Dorsolateral prefrontal cortex (tissue), 120 donors: ENCODE measurements at regions of chr4 and their contacts with region 1.

Region 1: GRCh38 chr4:70901984-70902576 is at the start of gene MOB1B:
- DNase-seq: peak; percentile 62 to 91 (median 86)
- H3K4me3 ChIP-seq: peak within 1 kb of the TSS; percentile 54 to 96 (median 82)
- H3K27ac ChIP-seq: peak within 1 kb of the TSS in 58 of 59 donors; percentile 17 to 95 (median 85)
- H3K27me3 ChIP-seq: no peaks in the 10 kb centered on the region
- CTCF ChIP-seq: peak in 37 of 56 donors; percentile 6 to 51 (median 24)
- total RNA-seq, gene MOB1B: 19.6 to 55.0 (median 32.2) TPM

Region 2: DNA sequence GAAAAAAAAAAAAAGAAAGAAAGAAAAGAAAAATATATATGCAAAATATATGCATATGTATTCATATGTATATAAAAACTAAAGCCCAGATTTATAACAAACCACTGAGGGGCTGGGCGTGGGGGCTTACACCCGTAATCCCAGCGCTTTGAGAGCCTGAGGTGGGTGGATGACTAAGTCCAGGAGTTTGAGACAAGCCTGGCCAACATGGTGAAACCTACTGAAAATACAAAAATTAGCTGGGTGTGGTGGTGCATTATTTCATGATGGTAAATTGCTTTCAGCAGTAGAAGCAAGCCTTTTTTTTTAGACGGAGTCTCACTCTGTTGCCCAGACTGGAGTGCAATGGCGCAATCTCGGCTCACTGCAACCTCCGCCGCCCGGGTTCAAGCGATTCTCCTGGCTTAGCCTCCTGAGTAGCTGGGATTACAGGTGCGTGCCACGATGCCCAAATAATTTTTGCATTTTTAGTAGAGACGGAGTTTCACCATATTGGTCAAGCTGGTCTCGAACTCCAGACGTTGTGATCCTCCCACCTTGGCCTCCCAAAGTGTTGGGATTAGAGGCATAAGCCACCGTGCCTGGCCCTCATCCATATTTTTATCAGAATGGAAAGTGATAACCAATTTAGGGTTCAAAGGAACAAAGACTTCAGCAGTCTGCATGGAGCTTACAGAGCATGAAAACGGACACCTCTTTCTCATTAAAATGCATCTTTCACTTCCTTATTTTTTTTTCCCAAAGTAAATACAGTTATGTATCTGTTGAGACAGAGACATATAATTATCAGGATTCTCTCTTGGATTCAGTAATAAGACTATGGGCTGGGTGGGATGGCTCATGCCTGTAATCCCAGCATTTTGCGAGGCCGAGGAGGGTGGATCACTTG is 27.6 kb before region 1 on chr4:
- intact Hi-C with region 1: no loop called
- DNase-seq: no peak
- H3K4me3 ChIP-seq: no peak overlapping the region
- H3K27ac ChIP-seq: no peak overlapping the region
- H3K27me3 ChIP-seq: no peaks in the 10 kb centered on the region
- CTCF ChIP-seq: no peak

Region 3: GRCh38 chr4:70943114-70943513 is 41.0 kb after region 1 on chr4:
- intact Hi-C with region 1: no loop called
- DNase-seq: no peak
- H3K4me3 ChIP-seq: no peak overlapping the region
- H3K27ac ChIP-seq: no peak overlapping the region
- H3K27me3 ChIP-seq: no peaks in the 10 kb centered on the region
- CTCF ChIP-seq: no peak

Region 4: DNA sequence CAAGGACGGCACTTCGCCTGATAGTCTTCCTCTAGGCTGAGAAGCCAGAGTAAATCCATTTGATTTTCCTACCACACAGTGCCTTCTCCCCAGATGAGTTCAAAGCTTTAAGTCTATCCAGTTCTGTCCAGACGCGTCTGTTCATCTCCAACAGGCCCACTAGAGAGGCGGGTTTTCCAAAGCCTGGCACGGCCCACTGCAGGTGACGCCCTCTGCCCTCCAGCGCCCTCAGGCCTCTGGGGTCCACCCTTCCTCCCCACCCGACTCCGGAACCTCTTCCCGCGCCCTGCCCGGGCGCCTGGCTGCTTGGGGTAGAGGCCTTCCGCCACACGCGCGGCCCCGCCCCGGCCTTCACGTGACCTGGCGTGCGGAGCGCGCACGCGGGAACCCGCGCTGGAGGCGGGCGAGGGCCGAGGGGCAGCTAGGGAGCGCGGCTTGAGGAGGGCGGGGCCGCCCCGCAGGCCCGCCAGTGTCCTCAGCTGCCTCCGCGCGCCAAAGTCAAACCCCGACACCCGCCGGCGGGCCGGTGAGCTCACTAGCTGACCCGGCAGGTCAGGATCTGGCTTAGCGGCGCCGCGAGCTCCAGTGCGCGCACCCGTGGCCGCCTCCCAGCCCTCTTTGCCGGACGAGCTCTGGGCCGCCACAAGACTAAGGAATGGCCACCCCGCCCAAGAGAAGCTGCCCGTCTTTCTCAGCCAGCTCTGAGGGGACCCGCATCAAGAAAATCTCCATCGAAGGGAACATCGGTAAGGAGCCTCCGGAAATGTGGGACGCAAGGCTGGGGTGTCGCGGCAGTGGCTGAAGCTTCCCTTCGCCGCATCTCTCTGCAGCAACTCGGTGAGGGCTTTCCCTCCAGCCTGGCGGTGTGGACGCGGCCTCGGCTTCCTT is 91.3 kb after region 1 on chr4 and contains the start of gene DCK:
- intact Hi-C with region 1: loop called in 1 of 2 experiments (anchors 5 kb)
- DNase-seq: peak; percentile 71 to 95 (median 86)
- H3K4me3 ChIP-seq: peak within 1 kb of the TSS; percentile 64 to 95 (median 88)
- H3K27ac ChIP-seq: peak within 1 kb of the TSS; percentile 52 to 97 (median 88)
- H3K27me3 ChIP-seq: no peaks in the 10 kb centered on the region
- CTCF ChIP-seq: peak in 34 of 56 donors; percentile 4 to 61 (median 26)
- total RNA-seq, gene DCK: 12.5 to 37.5 (median 22.1) TPM

Region 5: DNA sequence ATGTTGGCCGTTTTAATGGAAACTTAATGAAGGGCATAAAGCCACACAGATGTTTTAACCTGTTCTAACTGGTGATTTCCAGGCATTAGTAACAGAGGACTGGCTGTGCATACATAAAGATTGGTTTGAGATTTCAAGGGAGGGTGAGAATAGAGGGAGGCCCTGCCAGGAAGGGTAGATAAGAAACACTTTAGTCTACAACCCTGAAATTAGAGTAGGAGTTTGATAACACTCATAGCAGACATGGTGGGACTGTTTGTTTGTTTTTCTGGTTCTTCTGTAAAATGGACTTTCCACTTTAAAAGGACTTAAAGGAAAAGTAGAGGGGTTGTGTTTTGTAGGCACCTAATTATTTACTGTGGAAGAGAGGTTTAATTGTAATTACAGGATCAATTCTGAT is 453.0 kb after region 1 on chr4:
- intact Hi-C with region 1: no loop called
- DNase-seq: no peak
- H3K4me3 ChIP-seq: no peak overlapping the region
- H3K27ac ChIP-seq: no peak overlapping the region
- H3K27me3 ChIP-seq: no peaks in the 10 kb centered on the region
- CTCF ChIP-seq: no peak